ENCODE measurements at regions of chr16 and their contacts with region 1.

Region 1: DNA sequence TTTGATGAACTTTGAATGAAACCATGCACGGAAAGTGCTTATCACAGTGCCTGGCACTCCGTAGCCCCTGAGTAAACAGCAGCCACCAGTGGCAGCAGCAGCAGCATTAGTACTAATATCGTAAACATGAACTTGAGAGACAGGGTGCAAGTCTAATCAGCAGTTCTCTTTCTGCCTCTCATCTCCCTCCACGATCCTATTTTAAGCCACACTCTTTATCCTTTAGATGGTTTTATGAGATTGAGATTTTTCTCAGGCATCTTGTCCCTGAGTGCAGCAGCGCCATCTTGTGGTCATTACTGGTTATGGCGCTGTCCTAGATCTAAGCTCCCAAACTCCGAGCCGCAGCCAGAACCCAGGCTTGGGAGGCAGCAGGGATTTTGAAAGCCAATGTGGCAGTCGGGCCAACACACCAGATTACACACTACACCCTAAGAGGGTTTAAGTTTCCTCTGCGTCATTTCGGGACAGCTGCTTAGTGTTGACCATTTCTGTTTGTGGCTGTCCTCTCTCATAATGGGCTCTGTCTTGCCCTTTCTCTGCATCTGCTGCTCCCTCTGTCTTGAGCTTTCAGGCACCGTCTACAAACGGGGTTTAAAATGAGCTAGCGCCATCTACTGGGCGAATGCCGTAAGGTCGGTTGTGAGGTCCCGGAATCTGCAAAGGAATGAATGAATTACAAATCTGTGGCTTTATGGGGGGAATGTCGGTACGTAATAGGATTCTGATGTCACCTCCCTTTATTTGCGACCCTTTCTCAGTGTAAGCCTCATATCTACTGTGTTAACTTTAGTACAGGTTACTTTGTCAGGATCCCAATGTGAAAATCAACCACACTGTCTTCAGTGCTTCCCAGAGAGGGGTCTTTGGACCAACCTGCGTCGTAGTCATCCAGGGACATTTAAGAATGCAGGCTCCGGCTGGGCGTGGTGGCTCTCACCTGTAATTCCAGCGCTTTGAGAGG is 64.5 kb downstream of the CYLD start:
- DNase-seq: peak; percentile 83 to 88
- H3K4me3 ChIP-seq: peak overlapping the region; percentile 21
- H3K4me1 ChIP-seq: peaks cover 3% of the 10 kb centered on the region
- H3K27me3 ChIP-seq: no peaks in the 10 kb centered on the region

Region 2: GRCh38 chr16:50665128-50665878 is 141.1 kb before region 1 on chr16:
- in situ Hi-C with region 1: loop called (anchors 10 kb)
- DNase-seq: peak; percentile 60 to 91
- H3K4me3 ChIP-seq: peak overlapping the region; percentile 27
- H3K4me1 ChIP-seq: peaks cover 4% of the 10 kb centered on the region
- H3K27me3 ChIP-seq: no peaks in the 10 kb centered on the region